Activated B cell treated with CpG ODN at 0.5 μM for 24 hours (primary cell): ENCODE measurements at regions of chr19 and their contacts with region 1.

Region 1: DNA sequence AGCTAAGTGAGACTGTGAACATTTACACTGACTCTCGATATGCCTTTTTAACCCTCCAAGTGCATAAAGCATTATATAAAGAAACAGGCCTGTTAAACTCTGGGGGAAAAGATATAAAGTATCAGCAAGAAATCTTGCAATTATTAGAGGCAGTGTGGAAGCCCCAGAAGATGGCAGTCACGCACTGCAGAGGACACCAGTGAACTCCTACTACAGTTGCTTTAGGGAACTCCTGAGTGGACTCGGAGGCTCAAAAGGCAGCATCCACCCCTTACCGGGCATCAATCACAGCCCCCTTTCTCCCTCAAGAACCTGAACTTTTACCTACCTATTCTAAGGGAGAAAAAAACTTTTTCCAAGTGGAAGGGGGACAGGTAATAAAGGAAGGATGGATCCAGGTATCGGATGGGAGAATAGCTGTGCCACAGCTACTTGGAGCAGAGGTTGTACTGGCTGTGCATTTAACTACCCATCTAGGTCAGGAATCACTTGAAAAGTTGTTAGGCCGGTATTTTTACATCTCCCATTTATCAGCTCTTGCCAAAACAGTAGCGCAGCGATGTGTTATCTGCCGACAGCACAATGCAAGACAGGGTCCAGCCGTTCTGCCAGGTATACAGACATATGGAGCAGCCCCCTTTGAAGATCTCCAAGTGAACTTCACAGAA is 80.1 kb downstream of the ZNF486 start:
- DNase-seq: no peak
- ATAC-seq: no peak
- H3K4me3 Mint-ChIP-seq: no peak overlapping the region
- H3K27ac Mint-ChIP-seq: no peak overlapping the region
- H3K4me1 Mint-ChIP-seq: peaks cover 17% of the 10 kb centered on the region
- H3K27me3 Mint-ChIP-seq: no peaks in the 10 kb centered on the region
- CTCF ChIP-seq: no peak

Region 2: DNA sequence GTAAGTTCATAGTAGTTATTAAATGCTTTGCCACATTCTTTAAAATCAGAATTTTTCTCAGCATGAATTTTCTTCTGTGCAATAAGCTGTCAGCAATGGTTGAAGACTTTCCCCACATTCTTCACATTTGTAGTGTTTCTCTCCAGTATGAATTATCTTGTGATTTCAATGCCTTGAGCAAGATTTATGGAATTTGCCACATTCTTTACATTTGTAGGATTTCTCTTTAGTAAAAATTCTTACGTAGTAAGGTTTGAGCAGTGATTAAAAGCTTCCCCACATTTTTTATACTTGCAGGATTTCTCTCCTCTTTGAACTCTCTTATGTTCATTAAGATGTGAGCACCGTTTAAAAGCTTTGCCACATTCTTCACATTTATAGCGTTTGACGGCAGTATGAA is 241.4 kb before region 1 on chr19:
- CTCF ChIA-PET with region 1: no interaction called
- POLR2A ChIA-PET with region 1: no interaction called
- intact Hi-C with region 1: no loop called
- DNase-seq: no peak
- ATAC-seq: no peak
- H3K4me3 Mint-ChIP-seq: no peak overlapping the region
- H3K27ac Mint-ChIP-seq: no peak overlapping the region
- H3K4me1 Mint-ChIP-seq: no peaks in the 10 kb centered on the region
- H3K27me3 Mint-ChIP-seq: no peaks in the 10 kb centered on the region
- CTCF ChIP-seq: no peak

Region 3: GRCh38 chr19:20028611-20029010 is 218.5 kb before region 1 on chr19:
- CTCF ChIA-PET with region 1: no interaction called
- POLR2A ChIA-PET with region 1: no interaction called
- intact Hi-C with region 1: no loop called
- DNase-seq: no peak
- ATAC-seq: no peak
- H3K4me3 Mint-ChIP-seq: no peak overlapping the region
- H3K27ac Mint-ChIP-seq: no peak overlapping the region
- H3K4me1 Mint-ChIP-seq: no peaks in the 10 kb centered on the region
- H3K27me3 Mint-ChIP-seq: no peaks in the 10 kb centered on the region
- CTCF ChIP-seq: no peak

Region 4: GRCh38 chr19:21256722-21257121 is 1009.6 kb after region 1 on chr19:
- CTCF ChIA-PET with region 1: no interaction called
- POLR2A ChIA-PET with region 1: no interaction called
- intact Hi-C with region 1: loop called (anchors 5 kb)
- DNase-seq: no peak
- ATAC-seq: no peak
- H3K4me3 Mint-ChIP-seq: no peak overlapping the region
- H3K27ac Mint-ChIP-seq: no peak overlapping the region
- H3K4me1 Mint-ChIP-seq: no peaks in the 10 kb centered on the region
- H3K27me3 Mint-ChIP-seq: no peaks in the 10 kb centered on the region
- CTCF ChIP-seq: no peak